Naive thymus-derived CD4-positive, alpha-beta T cell (primary cell): ENCODE measurements at regions of chr1 and their contacts with region 1.

Region 1: GRCh38 chr1:160261893-160262794 is at the start of gene DCAF8:
- DNase-seq: peak; percentile 92 to 97 (median 96)
- ATAC-seq: peak; percentile 96
- H3K4me3 ChIP-seq: peak within 1 kb of the TSS; percentile 66
- H3K4me3 Mint-ChIP-seq: peak within 1 kb of the TSS; percentile 82 to 100 (median 97)
- H3K27ac ChIP-seq: peak within 1 kb of the TSS; percentile 93
- H3K27ac Mint-ChIP-seq: peak within 1 kb of the TSS; percentile 94 to 100 (median 96)
- H3K4me1 ChIP-seq: peaks cover 22 to 29% of the 10 kb centered on the region in 2 donors
- H3K4me1 Mint-ChIP-seq: peaks cover 23 to 59% (median 45%) of the 10 kb centered on the region in 7 donors
- H3K27me3 ChIP-seq: no peaks in the 10 kb centered on the region
- H3K27me3 Mint-ChIP-seq: peaks cover 0 to 3% (median 0%) of the 10 kb centered on the region in 5 donors
- total RNA-seq, gene DCAF8: 115 to 226 (median 176) TPM

Region 2: GRCh38 chr1:159009704-159010361 is 1252.3 kb before region 1 on chr1 and contains the start of gene IFI16:
- CTCF ChIA-PET with region 1: no interaction called
- POLR2A ChIA-PET with region 1: no interaction called
- intact Hi-C with region 1: loop called in 1 of 2 experiments (anchors 5 kb)
- DNase-seq: peak in 8 of 9 donors; percentile 56 to 80 (median 71)
- ATAC-seq: peak; percentile 84
- H3K4me3 ChIP-seq: peak within 1 kb of the TSS; percentile 86
- H3K4me3 Mint-ChIP-seq: peak within 1 kb of the TSS; percentile 85 to 98 (median 92)
- H3K27ac ChIP-seq: peak within 1 kb of the TSS; percentile 87
- H3K27ac Mint-ChIP-seq: peak within 1 kb of the TSS; percentile 92 to 99 (median 96)
- H3K4me1 ChIP-seq: peaks cover 28% of the 10 kb centered on the region in 2 donors
- H3K4me1 Mint-ChIP-seq: peaks cover 37 to 64% (median 54%) of the 10 kb centered on the region in 7 donors
- H3K27me3 ChIP-seq: no peaks in the 10 kb centered on the region
- H3K27me3 Mint-ChIP-seq: no peaks in the 10 kb centered on the region
- total RNA-seq, gene IFI16: 42.4 to 307 (median 96.0) TPM

Region 3: GRCh38 chr1:159780583-159781582 is 481.3 kb before region 1 on chr1 and contains the start of gene DUSP23:
- CTCF ChIA-PET with region 1: no interaction called
- POLR2A ChIA-PET with region 1: no interaction called
- intact Hi-C with region 1: loop called (anchors 2 to 5 kb)
- DNase-seq: peak; percentile 88 to 96 (median 96)
- ATAC-seq: peak; percentile 97
- H3K4me3 ChIP-seq: peak within 1 kb of the TSS; percentile 69
- H3K4me3 Mint-ChIP-seq: peak within 1 kb of the TSS; percentile 78 to 93 (median 84)
- H3K27ac ChIP-seq: peak within 1 kb of the TSS; percentile 66
- H3K27ac Mint-ChIP-seq: peak within 1 kb of the TSS; percentile 2 to 94 (median 85)
- H3K4me1 ChIP-seq: peaks cover 6% of the 10 kb centered on the region in 2 donors
- H3K4me1 Mint-ChIP-seq: peaks cover 9 to 33% (median 28%) of the 10 kb centered on the region in 7 donors
- H3K27me3 ChIP-seq: no peaks in the 10 kb centered on the region
- H3K27me3 Mint-ChIP-seq: peaks cover 0 to 11% (median 0%) of the 10 kb centered on the region in 5 donors
- total RNA-seq, gene DUSP23: 7.4 to 18.9 (median 12.2) TPM

Region 4: GRCh38 chr1:160205242-160206035 is 56.7 kb before region 1 on chr1 and contains the start of gene PEA15:
- CTCF ChIA-PET with region 1: no interaction called
- POLR2A ChIA-PET with region 1: interaction called, 11 read pairs
- intact Hi-C with region 1: loop called (anchors 1 to 2 kb)
- DNase-seq: peak; percentile 43 to 81 (median 49)
- ATAC-seq: peak; percentile 81
- H3K4me3 ChIP-seq: peak within 1 kb of the TSS; percentile 77
- H3K4me3 Mint-ChIP-seq: peak within 1 kb of the TSS; percentile 78 to 94 (median 88)
- H3K27ac ChIP-seq: peak within 1 kb of the TSS; percentile 74
- H3K27ac Mint-ChIP-seq: peak within 1 kb of the TSS; percentile 75 to 92 (median 88)
- H3K4me1 ChIP-seq: peaks cover 12 to 16% of the 10 kb centered on the region in 2 donors
- H3K4me1 Mint-ChIP-seq: peaks cover 31 to 49% (median 37%) of the 10 kb centered on the region in 7 donors
- H3K27me3 ChIP-seq: no peaks in the 10 kb centered on the region
- H3K27me3 Mint-ChIP-seq: no peaks in the 10 kb centered on the region
- total RNA-seq, gene PEA15: 11.5 to 38.6 (median 13.4) TPM

Region 5: DNA sequence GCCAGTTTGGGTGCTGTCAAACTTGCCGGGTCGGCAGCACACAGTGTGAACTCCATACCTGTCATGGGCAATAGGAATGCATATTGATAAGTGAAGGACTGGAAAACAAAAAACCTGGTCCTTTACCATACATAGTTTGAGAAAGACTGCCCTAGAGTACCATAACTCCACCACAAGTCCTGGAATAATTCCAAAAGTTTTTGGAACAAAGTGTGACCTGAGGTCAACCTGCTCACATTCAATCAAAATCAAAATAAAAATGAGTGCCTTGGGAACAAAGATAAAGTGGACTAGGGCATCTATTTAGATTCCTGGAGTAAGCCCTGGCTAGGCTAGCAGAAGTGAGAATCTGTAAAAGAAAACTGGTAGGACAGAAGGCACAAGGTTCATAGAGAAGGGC is 15.2 kb after region 1 on chr1:
- CTCF ChIA-PET with region 1: no interaction called
- POLR2A ChIA-PET with region 1: interaction called, 99 read pairs
- intact Hi-C with region 1: no loop called
- DNase-seq: no peak
- ATAC-seq: no peak
- H3K4me3 ChIP-seq: no peak overlapping the region
- H3K4me3 Mint-ChIP-seq: no peak overlapping the region
- H3K27ac ChIP-seq: no peak overlapping the region
- H3K27ac Mint-ChIP-seq: no peak overlapping the region
- H3K4me1 ChIP-seq: no peaks in the 10 kb centered on the region
- H3K4me1 Mint-ChIP-seq: peaks cover 0 to 5% (median 0%) of the 10 kb centered on the region in 7 donors
- H3K27me3 ChIP-seq: no peaks in the 10 kb centered on the region
- H3K27me3 Mint-ChIP-seq: no peaks in the 10 kb centered on the region

Region 6: DNA sequence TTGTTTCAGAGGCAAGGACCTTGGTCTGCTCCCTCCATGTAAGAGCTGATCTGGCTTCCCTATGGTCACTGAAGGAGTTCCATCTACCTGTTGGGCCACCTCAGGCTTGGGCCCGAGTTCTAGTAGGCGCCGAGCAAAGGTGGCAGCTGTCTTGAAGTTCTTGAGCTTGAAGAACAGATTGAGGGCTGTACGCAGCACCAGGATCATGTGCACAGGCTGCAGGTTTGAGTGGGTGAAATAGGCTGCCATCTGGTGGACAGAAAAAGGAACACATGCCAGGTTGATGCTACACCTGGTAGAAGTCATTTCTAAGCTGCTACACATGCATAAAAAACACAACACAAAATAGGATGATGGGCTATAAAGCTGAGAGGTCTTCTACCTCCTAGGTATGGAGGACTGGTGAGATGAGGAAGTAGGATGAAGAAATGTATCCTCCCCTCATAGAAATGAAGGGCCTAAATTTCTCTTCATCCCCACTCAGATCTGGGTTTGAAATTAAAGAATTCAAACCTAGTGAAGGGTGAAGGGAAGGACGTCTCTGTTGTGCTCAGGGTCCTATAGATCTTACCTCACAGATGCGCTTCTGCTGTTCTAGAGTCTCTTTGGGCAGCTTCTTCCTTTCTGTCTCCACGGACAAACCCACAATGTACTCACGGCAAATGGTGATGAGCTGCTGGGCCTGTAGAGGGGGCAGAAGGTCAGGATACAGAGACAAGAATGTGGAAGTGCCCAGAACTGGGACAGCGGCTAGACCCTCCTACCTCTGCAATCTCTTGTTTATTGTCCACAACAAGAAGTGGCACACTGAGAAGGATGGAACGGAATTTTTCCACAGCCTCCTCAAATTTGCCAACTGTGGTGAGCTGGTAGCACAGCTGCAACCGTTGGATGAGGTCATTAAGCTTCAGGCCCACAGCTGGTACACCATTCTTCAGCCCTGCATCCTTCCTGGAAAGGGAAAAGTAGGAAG is 29.4 kb after region 1 on chr1:
- CTCF ChIA-PET with region 1: interaction called, 8 read pairs
- POLR2A ChIA-PET with region 1: interaction called, 33 read pairs
- intact Hi-C with region 1: loop called in 1 of 2 experiments (anchors 1 kb)
- DNase-seq: peak; percentile 24 to 82 (median 74)
- ATAC-seq: peak; percentile 98
- H3K4me3 ChIP-seq: no peak overlapping the region
- H3K4me3 Mint-ChIP-seq: no peak overlapping the region
- H3K27ac ChIP-seq: no peak overlapping the region
- H3K27ac Mint-ChIP-seq: peak overlapping the region; percentile 0 to 88 (median 40)
- H3K4me1 ChIP-seq: peaks cover 0 to 3% of the 10 kb centered on the region in 2 donors
- H3K4me1 Mint-ChIP-seq: peaks cover 2 to 7% (median 6%) of the 10 kb centered on the region in 7 donors
- H3K27me3 ChIP-seq: no peaks in the 10 kb centered on the region
- H3K27me3 Mint-ChIP-seq: no peaks in the 10 kb centered on the region

Region 7: DNA sequence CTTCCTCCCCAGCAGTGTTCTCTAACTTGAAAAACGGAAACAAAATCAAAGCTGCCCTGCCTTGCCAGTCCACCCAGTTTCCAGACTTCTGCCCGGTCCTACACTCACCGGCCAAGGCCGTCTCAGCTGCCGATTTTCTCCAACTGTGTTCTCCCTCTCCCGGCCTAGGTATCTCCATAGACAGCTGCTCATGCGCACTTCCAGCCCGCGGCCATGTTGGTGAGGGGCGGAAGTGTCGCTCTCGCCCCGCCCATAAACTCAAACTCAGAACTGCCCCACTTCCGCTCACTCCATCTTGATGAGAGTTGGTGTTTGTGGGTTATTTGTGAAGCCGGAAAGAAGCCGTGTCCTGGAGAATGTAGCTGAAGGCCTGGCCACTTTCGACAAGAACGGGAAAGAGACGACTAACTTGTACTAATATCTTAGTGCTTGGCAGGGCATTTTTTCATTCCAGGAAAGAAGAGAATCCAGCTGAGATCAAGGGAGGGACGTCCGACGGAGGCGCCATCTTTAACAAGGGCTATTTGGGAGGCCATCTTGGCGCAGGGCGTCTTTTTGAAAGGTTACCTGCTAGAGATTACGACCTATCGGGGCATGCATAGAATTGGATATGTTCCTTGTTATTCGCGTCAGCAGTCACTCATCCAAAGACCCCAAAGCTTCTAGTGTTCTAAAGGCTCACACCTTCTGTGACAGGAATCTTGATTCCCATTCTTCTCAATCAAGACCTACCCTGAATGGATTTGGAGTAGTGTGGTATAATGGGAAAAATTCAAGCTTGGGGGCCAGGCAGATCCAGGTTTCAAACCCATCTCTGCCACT is 783.8 kb after region 1 on chr1 and contains the start of gene USF1:
- CTCF ChIA-PET with region 1: no interaction called
- POLR2A ChIA-PET with region 1: no interaction called
- intact Hi-C with region 1: loop called in 1 of 2 experiments (anchors 10 kb)
- DNase-seq: peak; percentile 84 to 96 (median 93)
- ATAC-seq: peak; percentile 89
- H3K4me3 ChIP-seq: peak within 1 kb of the TSS; percentile 93
- H3K4me3 Mint-ChIP-seq: peak within 1 kb of the TSS; percentile 93 to 100 (median 97)
- H3K27ac ChIP-seq: peak within 1 kb of the TSS; percentile 92
- H3K27ac Mint-ChIP-seq: peak within 1 kb of the TSS; percentile 92 to 100 (median 99)
- H3K4me1 ChIP-seq: peaks cover 17 to 23% of the 10 kb centered on the region in 2 donors
- H3K4me1 Mint-ChIP-seq: peaks cover 41 to 54% (median 49%) of the 10 kb centered on the region in 7 donors
- H3K27me3 ChIP-seq: no peaks in the 10 kb centered on the region
- H3K27me3 Mint-ChIP-seq: no peaks in the 10 kb centered on the region
- total RNA-seq, gene USF1: 71.6 to 115 (median 91.7) TPM